ENCODE measurements at regions of chr5 and their contacts with region 1.

Region 1: DNA sequence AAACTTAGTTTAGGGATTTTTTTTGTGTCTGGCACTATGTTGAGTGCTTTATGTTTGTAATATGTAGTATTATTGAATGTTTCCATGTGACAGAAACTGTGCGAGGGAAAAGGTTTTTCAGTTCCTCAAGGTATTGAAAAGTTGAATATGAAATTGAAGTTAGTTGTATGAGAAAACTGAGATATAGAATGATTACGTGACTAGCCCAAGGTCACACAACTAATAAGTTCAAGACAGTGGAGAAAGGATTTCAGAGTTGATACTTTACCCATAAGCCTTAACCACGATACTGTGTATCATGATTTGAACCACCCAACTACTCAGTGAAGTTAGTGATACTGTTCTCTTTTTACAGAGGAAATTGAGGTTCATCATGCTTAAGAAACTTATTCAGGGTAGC is 5.7 kb downstream of the NIPBL start:
- DNase-seq: no peak
- H3K4me3 ChIP-seq: no peak overlapping the region
- H3K27ac ChIP-seq: no peak overlapping the region
- H3K4me1 ChIP-seq: peaks cover 8% of the 10 kb centered on the region
- H3K27me3 ChIP-seq: no peaks in the 10 kb centered on the region
- CTCF ChIP-seq: no peak

Region 2: GRCh38 chr5:36928947-36929346 is 46.7 kb after region 1 on chr5:
- CTCF ChIA-PET with region 1: no interaction called
- dilution Hi-C with region 1: no loop called
- in situ Hi-C with region 1: no loop called
- intact Hi-C with region 1: no loop called
- DNase-seq: peak; percentile 88
- H3K4me3 ChIP-seq: no peak overlapping the region
- H3K27ac ChIP-seq: peak overlapping the region; percentile 77
- H3K4me1 ChIP-seq: peaks cover 6% of the 10 kb centered on the region
- H3K27me3 ChIP-seq: no peaks in the 10 kb centered on the region
- CTCF ChIP-seq: no peak

Region 3: DNA sequence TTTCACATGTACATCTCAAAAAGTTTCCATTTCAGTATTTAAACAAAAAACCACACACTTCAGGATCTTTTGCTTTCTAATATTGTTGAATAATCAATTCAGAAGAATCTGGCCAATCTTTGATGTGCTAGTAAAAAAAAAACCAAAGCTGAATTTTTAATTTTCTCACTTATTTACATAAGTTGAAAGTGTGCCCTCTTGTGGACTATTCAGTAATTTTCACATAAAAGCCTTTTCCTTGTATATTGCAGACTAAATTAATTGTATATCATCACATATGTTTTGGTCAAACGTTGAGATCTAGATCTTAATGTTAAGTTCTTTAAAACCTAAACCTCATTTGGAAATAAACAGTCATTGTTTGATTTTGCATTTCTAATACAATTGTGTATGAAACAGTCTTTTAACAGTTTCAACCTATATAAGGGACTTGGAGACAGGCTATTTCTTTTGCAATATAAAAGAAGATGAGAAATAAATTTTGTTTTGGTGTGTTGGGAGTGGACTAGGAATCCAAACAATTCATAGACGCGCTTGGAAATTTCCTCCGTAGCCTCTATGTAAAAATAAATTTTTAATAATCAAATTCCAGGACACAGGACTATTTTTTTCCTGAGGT is 62.5 kb after region 1 on chr5:
- CTCF ChIA-PET with region 1: no interaction called
- dilution Hi-C with region 1: no loop called
- in situ Hi-C with region 1: loop called in 1 of 2 experiments (anchors 5 kb)
- intact Hi-C with region 1: loop called (anchors 1 kb)
- DNase-seq: peak; percentile 39
- H3K4me3 ChIP-seq: no peak overlapping the region
- H3K27ac ChIP-seq: no peak overlapping the region
- H3K4me1 ChIP-seq: peaks cover 9% of the 10 kb centered on the region
- H3K27me3 ChIP-seq: no peaks in the 10 kb centered on the region
- CTCF ChIP-seq: peak; percentile 51 to 52

Measured in mammary epithelial cell (primary cell).